ENCODE measurements at regions of chr11 and their contacts with region 1.

Region 1: GRCh38 chr11:95688580-95689189 is 100.9 kb downstream of the FAM76B start:
- DNase-seq: peak in 2 of 9 experiments; percentile 36 to 62
- ATAC-seq: peak; percentile 72
- H3K4me3 ChIP-seq: no peak overlapping the region
- H3K4me3 Mint-ChIP-seq: no peak overlapping the region
- H3K27ac ChIP-seq: peak overlapping the region; percentile 14 to 45
- H3K27ac Mint-ChIP-seq: no peak overlapping the region
- H3K4me1 ChIP-seq: peaks cover 54% of the 10 kb centered on the region
- H3K4me1 Mint-ChIP-seq: peaks cover 25% of the 10 kb centered on the region
- H3K27me3 ChIP-seq: no peaks in the 10 kb centered on the region
- H3K27me3 Mint-ChIP-seq: no peaks in the 10 kb centered on the region
- CTCF ChIP-seq: no peak

Region 2: GRCh38 chr11:95521133-95521542 is 167.5 kb before region 1 on chr11:
- CTCF ChIA-PET with region 1: no interaction called
- POLR2A ChIA-PET with region 1: no interaction called
- intact Hi-C with region 1: no loop called
- DNase-seq: no peak
- ATAC-seq: no peak
- H3K4me3 ChIP-seq: no peak overlapping the region
- H3K4me3 Mint-ChIP-seq: no peak overlapping the region
- H3K27ac ChIP-seq: no peak overlapping the region
- H3K27ac Mint-ChIP-seq: no peak overlapping the region
- H3K4me1 ChIP-seq: no peaks in the 10 kb centered on the region
- H3K4me1 Mint-ChIP-seq: no peaks in the 10 kb centered on the region
- H3K27me3 ChIP-seq: no peaks in the 10 kb centered on the region
- H3K27me3 Mint-ChIP-seq: no peaks in the 10 kb centered on the region
- CTCF ChIP-seq: no peak

Region 3: DNA sequence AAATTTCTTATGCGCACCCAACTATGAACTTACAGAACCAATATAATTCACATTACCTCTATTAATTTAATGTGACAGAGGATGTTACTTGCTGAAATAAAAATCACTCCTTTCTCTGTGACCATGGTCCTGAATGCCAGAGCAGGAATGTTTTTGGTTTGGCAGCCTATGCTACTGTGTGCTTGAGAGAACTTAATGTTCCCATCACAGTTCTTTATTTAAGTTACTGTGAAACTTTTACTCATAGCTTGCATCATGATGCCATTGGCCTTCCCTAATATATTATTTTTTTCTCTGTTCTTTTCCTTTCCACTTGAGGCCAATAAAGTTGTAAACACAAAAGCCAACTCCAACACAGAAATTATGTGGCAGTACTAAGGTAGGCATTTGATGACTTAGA is 41.3 kb before region 1 on chr11:
- CTCF ChIA-PET with region 1: no interaction called
- POLR2A ChIA-PET with region 1: interaction called, 3 read pairs
- intact Hi-C with region 1: loop called in 1 of 2 experiments (anchors 5 kb)
- DNase-seq: no peak
- ATAC-seq: no peak
- H3K4me3 ChIP-seq: no peak overlapping the region
- H3K4me3 Mint-ChIP-seq: no peak overlapping the region
- H3K27ac ChIP-seq: no peak overlapping the region
- H3K27ac Mint-ChIP-seq: no peak overlapping the region
- H3K4me1 ChIP-seq: no peaks in the 10 kb centered on the region
- H3K4me1 Mint-ChIP-seq: no peaks in the 10 kb centered on the region
- H3K27me3 ChIP-seq: no peaks in the 10 kb centered on the region
- H3K27me3 Mint-ChIP-seq: peaks cover 3% of the 10 kb centered on the region
- CTCF ChIP-seq: no peak

Region 4: DNA sequence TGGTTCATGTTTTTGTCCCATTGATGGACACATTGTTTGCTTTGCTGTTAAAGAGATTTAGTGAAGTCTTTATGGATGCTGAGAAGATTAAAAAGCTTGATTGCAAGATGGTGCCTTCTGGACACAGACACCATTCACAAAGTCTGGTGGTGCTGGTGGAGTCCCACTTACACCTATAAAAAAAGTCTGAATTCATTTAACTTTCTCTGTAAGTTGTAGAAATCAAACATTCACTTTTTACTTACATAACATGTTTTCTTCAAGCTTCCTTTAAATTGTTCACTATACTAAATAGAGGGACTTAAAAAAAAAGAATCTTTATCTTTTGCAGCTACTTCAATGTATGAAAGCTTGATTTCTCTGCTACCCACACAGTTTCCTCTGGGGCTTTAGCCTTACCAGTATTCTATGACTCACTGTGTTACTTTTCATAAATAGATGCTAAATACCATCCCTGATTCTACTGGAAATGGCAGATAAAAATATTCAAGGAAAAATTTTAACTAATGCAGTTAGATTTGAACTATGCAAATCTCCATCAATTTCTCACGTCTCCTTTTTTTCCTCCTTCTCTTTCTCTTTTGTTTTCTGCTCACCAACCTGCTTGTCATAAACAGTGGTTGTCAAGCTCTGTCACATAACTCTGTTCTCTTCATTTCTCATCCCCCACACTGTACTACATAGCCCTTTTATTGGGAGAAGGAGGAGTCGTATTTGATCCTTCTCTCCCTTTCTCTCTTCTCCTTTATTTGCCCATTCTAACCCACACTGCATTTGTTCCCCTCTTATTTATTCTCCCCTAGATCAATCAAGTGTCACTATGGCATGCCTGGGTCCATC is 11.2 kb after region 1 on chr11:
- CTCF ChIA-PET with region 1: interaction called, 34 read pairs
- POLR2A ChIA-PET with region 1: interaction called, 6 read pairs
- intact Hi-C with region 1: loop called in 1 of 2 experiments (anchors 1 kb)
- DNase-seq: peak in 2 of 9 experiments; percentile 37 to 60
- ATAC-seq: peak; percentile 76
- H3K4me3 ChIP-seq: peak overlapping the region; percentile 8 to 39
- H3K4me3 Mint-ChIP-seq: peak overlapping the region; percentile 67
- H3K27ac ChIP-seq: peak overlapping the region; percentile 64 to 92
- H3K27ac Mint-ChIP-seq: peak overlapping the region; percentile 92
- H3K4me1 ChIP-seq: peaks cover 64% of the 10 kb centered on the region
- H3K4me1 Mint-ChIP-seq: peaks cover 41% of the 10 kb centered on the region
- H3K27me3 ChIP-seq: no peaks in the 10 kb centered on the region
- H3K27me3 Mint-ChIP-seq: no peaks in the 10 kb centered on the region
- CTCF ChIP-seq: no peak

Region 5: DNA sequence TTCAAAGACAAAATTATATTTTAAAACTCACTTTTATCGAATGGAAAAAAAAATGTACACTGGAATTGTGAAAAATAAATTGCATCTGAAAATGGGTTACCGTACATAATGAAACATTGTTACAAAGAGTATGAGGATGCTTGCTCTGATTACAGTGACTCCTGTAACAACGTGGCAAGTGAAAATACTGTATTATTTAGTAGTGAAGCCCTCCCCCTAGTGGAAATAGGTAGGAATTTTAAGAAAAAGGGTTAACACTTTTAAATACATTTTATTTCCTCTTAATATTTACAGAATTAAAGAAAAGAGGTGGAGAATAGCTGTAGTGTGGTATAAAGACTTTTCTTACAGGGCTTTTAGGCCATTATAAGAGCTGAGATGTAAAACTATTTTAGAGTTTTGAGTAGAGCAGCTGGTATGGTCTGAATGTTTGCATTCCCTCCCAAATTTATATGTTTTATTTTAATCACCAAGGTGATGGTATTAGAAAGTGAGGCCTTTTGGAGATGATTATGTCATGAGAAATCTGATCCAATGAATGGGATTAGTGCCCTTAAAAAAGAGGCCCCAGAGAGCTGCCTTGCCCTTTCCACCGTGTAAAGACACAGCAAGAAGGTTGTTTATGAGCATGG is 75.7 kb after region 1 on chr11:
- CTCF ChIA-PET with region 1: no interaction called
- POLR2A ChIA-PET with region 1: no interaction called
- intact Hi-C with region 1: no loop called
- DNase-seq: peak in 2 of 9 experiments; percentile 61 to 73
- ATAC-seq: peak; percentile 86
- H3K4me3 ChIP-seq: no peak overlapping the region
- H3K4me3 Mint-ChIP-seq: no peak overlapping the region
- H3K27ac ChIP-seq: no peak overlapping the region
- H3K27ac Mint-ChIP-seq: no peak overlapping the region
- H3K4me1 ChIP-seq: no peaks in the 10 kb centered on the region
- H3K4me1 Mint-ChIP-seq: no peaks in the 10 kb centered on the region
- H3K27me3 ChIP-seq: peaks cover 0 to 2% of the 10 kb centered on the region in 2 experiments
- H3K27me3 Mint-ChIP-seq: peaks cover 5% of the 10 kb centered on the region
- CTCF ChIP-seq: peak; percentile 88